ENCODE measurements at regions of chr16 and their contacts with region 1.

Region 1: GRCh38 chr16:67415872-67416793 is at the start of gene ZDHHC1:
- DNase-seq: peak in 1 of 2 donors; percentile 48
- ATAC-seq: peak; percentile 85 to 88
- H3K4me3 ChIP-seq: peak within 1 kb of the TSS; percentile 59 to 87 (median 78)
- H3K27ac ChIP-seq: peak within 1 kb of the TSS; percentile 75 to 82 (median 76)
- H3K4me1 ChIP-seq: peaks cover 12 to 20% of the 10 kb centered on the region in 2 donors
- H3K27me3 ChIP-seq: no peaks in the 10 kb centered on the region
- CTCF ChIP-seq: peak; percentile 60 to 79 (median 75)
- POLR2A ChIP-seq: peak; percentile 24 to 34
- total RNA-seq, gene ZDHHC1: 4.4 to 11.0 (median 8.9) TPM

Region 2: DNA sequence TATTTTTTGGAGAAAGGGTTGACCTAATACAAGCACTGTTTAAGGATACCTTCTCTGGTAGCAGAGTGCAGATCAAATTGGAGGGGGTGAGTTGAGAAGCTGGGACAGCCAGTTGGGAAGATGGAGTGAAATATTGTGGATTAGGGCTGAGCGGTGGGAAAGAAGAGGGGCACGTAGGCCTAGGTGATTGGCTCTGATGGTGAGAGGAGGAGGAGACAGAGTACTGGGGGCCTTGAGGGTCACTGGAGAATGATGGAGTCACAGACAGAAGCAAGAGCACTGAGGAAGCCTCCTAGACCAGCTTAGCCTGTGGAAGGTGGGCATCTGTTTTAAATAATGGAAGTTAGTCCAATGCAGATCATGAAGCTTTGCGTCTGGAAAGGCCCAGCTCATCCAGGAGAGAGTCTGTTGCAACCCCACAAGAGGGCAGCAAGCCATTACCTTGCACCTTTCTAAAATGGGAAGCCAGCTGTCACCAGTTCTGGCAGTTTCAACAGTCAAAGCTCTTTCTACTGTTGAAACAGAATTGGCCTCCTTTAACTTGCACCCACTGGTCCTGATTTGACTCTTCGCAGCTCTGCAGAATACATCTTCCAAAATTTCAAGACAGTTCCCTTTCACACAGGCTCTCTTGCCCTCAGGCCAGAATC is 155.6 kb before region 1 on chr16:
- in situ Hi-C with region 1: loop called in 1 of 4 experiments (anchors 10 kb)
- intact Hi-C with region 1: no loop called
- DNase-seq: peak; percentile 69 to 85
- ATAC-seq: peak; percentile 100
- H3K4me3 ChIP-seq: no peak overlapping the region
- H3K27ac ChIP-seq: peak overlapping the region; percentile 64 to 83 (median 74)
- H3K4me1 ChIP-seq: peaks cover 10 to 13% of the 10 kb centered on the region in 2 donors
- H3K27me3 ChIP-seq: no peaks in the 10 kb centered on the region
- CTCF ChIP-seq: peak; percentile 52 to 67 (median 54)
- POLR2A ChIP-seq: no peak

Region 3: GRCh38 chr16:67279296-67280089 is 136.6 kb before region 1 on chr16 and contains the start of gene PLEKHG4:
- in situ Hi-C with region 1: no loop called
- intact Hi-C with region 1: loop called (anchors 5 kb)
- DNase-seq: peak; percentile 23 to 54
- ATAC-seq: peak; percentile 65 to 81
- H3K4me3 ChIP-seq: peak within 1 kb of the TSS; percentile 51 to 59 (median 54)
- H3K27ac ChIP-seq: peak within 1 kb of the TSS; percentile 3 to 50 (median 29)
- H3K4me1 ChIP-seq: no peaks in the 10 kb centered on the region
- H3K27me3 ChIP-seq: no peaks in the 10 kb centered on the region
- CTCF ChIP-seq: peak in 4 of 5 experiments; percentile 55 to 82 (median 73)
- POLR2A ChIP-seq: no peak
- total RNA-seq, gene PLEKHG4: 1.1 to 16.5 (median 2.6) TPM

Region 4: GRCh38 chr16:67349172-67349571 is 67.0 kb before region 1 on chr16:
- in situ Hi-C with region 1: no loop called
- intact Hi-C with region 1: loop called (anchors 2 kb)
- DNase-seq: no peak
- ATAC-seq: peak; percentile 62 to 72
- H3K4me3 ChIP-seq: no peak overlapping the region
- H3K27ac ChIP-seq: no peak overlapping the region
- H3K4me1 ChIP-seq: no peaks in the 10 kb centered on the region
- H3K27me3 ChIP-seq: no peaks in the 10 kb centered on the region
- CTCF ChIP-seq: peak in 4 of 5 experiments; percentile 38 to 53 (median 46)
- POLR2A ChIP-seq: no peak

Region 5: DNA sequence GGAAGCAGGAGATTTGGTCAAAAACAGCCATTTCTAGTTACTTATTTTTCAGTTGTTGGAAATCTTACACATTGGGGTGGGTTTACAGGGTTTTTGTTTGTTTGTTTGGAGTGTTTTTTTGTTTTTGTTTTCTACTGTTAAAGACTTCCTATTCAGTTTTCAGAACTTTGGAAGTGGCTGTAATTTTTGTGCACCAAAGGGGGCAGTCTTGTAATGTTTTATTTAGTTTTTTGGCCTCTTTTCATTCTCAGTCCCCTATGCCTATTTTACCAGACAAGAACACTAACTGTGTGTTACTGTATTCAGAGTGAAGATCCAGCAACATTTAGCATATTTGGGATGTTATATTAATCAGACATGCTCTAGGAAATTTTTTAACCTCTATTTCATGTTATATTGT is 43.5 kb before region 1 on chr16:
- in situ Hi-C with region 1: no loop called
- intact Hi-C with region 1: loop called (anchors 2 kb)
- DNase-seq: no peak
- ATAC-seq: no peak
- H3K4me3 ChIP-seq: no peak overlapping the region
- H3K27ac ChIP-seq: no peak overlapping the region
- H3K4me1 ChIP-seq: peaks cover 0 to 3% of the 10 kb centered on the region in 2 donors
- H3K27me3 ChIP-seq: no peaks in the 10 kb centered on the region
- CTCF ChIP-seq: peak in 4 of 5 experiments; percentile 22 to 53 (median 34)
- POLR2A ChIP-seq: no peak

Region 6: GRCh38 chr16:67632415-67633172 is 216.5 kb after region 1 on chr16:
- in situ Hi-C with region 1: no loop called
- intact Hi-C with region 1: no loop called
- DNase-seq: no peak
- ATAC-seq: no peak
- H3K4me3 ChIP-seq: no peak overlapping the region
- H3K27ac ChIP-seq: no peak overlapping the region
- H3K4me1 ChIP-seq: no peaks in the 10 kb centered on the region
- H3K27me3 ChIP-seq: no peaks in the 10 kb centered on the region
- CTCF ChIP-seq: no peak
- POLR2A ChIP-seq: no peak